CD4-positive, alpha-beta T cell (primary cell): ENCODE measurements at regions of chr20 and their contacts with region 1.

Region 1: DNA sequence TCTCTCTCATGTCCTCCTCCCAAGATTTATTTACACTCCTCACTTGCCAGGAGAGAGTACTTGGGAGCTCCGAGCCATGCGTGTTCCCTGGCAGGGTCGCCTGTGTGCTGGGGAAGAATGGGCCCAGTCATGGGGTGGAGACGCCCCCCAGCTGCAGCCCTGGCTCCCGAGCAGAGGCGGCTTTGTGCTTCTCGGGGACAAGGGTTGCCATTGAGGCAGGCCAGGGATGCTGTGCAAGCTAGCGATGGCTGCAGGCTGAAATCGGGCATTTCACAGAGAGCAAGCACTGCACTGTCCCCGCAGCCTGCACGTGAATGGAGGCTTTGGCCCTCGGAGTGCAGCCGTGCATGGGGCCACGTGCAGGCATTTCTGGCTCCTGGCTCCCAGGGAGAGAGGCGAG is 23.8 kb downstream of the PHACTR3 start:
- DNase-seq: no peak
- ATAC-seq: no peak
- H3K4me3 ChIP-seq: no peak overlapping the region
- H3K4me3 Mint-ChIP-seq: no peak overlapping the region
- H3K27ac ChIP-seq: no peak overlapping the region
- H3K27ac Mint-ChIP-seq: no peak overlapping the region
- H3K4me1 ChIP-seq: no peaks in the 10 kb centered on the region
- H3K4me1 Mint-ChIP-seq: no peaks in the 10 kb centered on the region
- H3K27me3 ChIP-seq: no peaks in the 10 kb centered on the region
- H3K27me3 Mint-ChIP-seq: peaks cover 25% of the 10 kb centered on the region
- CTCF ChIP-seq: no peak

Region 2: GRCh38 chr20:60624066-60624465 is 995.9 kb after region 1 on chr20:
- CTCF ChIA-PET with region 1: no interaction called
- POLR2A ChIA-PET with region 1: no interaction called
- intact Hi-C with region 1: loop called in 1 of 2 experiments (anchors 10 kb)
- DNase-seq: no peak
- ATAC-seq: no peak
- H3K4me3 ChIP-seq: no peak overlapping the region
- H3K4me3 Mint-ChIP-seq: no peak overlapping the region
- H3K27ac ChIP-seq: no peak overlapping the region
- H3K27ac Mint-ChIP-seq: no peak overlapping the region
- H3K4me1 ChIP-seq: no peaks in the 10 kb centered on the region
- H3K4me1 Mint-ChIP-seq: no peaks in the 10 kb centered on the region
- H3K27me3 ChIP-seq: peaks cover 0 to 2% of the 10 kb centered on the region in 2 experiments
- H3K27me3 Mint-ChIP-seq: peaks cover 28% of the 10 kb centered on the region
- CTCF ChIP-seq: no peak